Caco-2 (cell line): ENCODE measurements at regions of chr14 and their contacts with region 1.

Region 1: DNA sequence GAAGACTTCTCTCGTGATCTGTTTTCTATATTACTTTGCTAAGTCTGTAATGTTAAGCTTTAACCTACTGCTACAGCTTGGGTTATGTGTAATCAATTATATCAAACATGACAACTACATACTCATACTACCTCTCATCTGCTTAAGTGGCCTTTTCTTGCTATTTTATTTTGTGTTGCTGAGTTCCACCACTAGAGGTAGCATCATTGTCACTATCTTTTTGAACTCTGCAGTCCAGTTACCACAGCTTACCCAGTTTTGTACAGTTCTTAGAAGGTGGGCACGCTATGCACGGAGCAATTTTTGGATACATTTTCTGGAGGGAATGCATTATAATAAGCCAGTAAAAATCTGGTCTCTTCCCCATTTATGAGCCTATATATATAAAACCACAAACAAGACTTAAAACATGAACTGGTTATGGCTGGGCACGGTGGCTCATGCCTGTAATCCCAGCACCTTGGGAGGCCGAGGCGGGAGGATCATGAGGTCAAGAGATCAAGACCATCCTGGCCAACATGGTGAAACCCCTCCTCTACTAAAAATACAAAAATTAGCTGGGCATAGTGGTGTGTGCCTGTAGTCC is 48.5 kb downstream of the SAV1 start:
- DNase-seq: peak in 1 of 2 experiments; percentile 25
- H3K4me3 ChIP-seq: no peak overlapping the region
- H3K4me3 Mint-ChIP-seq: no peak overlapping the region
- H3K27ac Mint-ChIP-seq: no peak overlapping the region
- H3K4me1 ChIP-seq: no peaks in the 10 kb centered on the region
- H3K4me1 Mint-ChIP-seq: peaks cover 6% of the 10 kb centered on the region
- H3K27me3 ChIP-seq: no peaks in the 10 kb centered on the region
- H3K27me3 Mint-ChIP-seq: no peaks in the 10 kb centered on the region
- CTCF ChIP-seq: peak; percentile 65 to 66

Region 2: GRCh38 chr14:50688875-50689274 is 69.2 kb after region 1 on chr14:
- CTCF ChIA-PET with region 1: no interaction called
- POLR2A ChIA-PET with region 1: no interaction called
- intact Hi-C with region 1: loop called (anchors 2 kb)
- DNase-seq: no peak
- H3K4me3 ChIP-seq: no peak overlapping the region
- H3K4me3 Mint-ChIP-seq: no peak overlapping the region
- H3K27ac Mint-ChIP-seq: no peak overlapping the region
- H3K4me1 ChIP-seq: no peaks in the 10 kb centered on the region
- H3K4me1 Mint-ChIP-seq: no peaks in the 10 kb centered on the region
- H3K27me3 ChIP-seq: no peaks in the 10 kb centered on the region
- H3K27me3 Mint-ChIP-seq: no peaks in the 10 kb centered on the region
- CTCF ChIP-seq: no peak

Region 3: GRCh38 chr14:50714450-50715073 is 94.9 kb after region 1 on chr14:
- CTCF ChIA-PET with region 1: interaction called, 12 read pairs
- POLR2A ChIA-PET with region 1: no interaction called
- intact Hi-C with region 1: loop called (anchors 1 kb)
- DNase-seq: peak in 1 of 2 experiments; percentile 34
- H3K4me3 ChIP-seq: no peak overlapping the region
- H3K4me3 Mint-ChIP-seq: no peak overlapping the region
- H3K27ac Mint-ChIP-seq: no peak overlapping the region
- H3K4me1 ChIP-seq: no peaks in the 10 kb centered on the region
- H3K4me1 Mint-ChIP-seq: no peaks in the 10 kb centered on the region
- H3K27me3 ChIP-seq: no peaks in the 10 kb centered on the region
- H3K27me3 Mint-ChIP-seq: no peaks in the 10 kb centered on the region
- CTCF ChIP-seq: peak; percentile 10 to 66